ENCODE measurements at regions of chr7 and their contacts with region 1.

Region 1: GRCh38 chr7:37495574-37496184 is 47.0 kb upstream of the ELMO1 start:
- DNase-seq: no peak
- H3K4me3 Mint-ChIP-seq: no peak overlapping the region
- H3K27ac Mint-ChIP-seq: no peak overlapping the region
- H3K4me1 Mint-ChIP-seq: peaks cover 7% of the 10 kb centered on the region
- H3K27me3 Mint-ChIP-seq: no peaks in the 10 kb centered on the region

Region 2: DNA sequence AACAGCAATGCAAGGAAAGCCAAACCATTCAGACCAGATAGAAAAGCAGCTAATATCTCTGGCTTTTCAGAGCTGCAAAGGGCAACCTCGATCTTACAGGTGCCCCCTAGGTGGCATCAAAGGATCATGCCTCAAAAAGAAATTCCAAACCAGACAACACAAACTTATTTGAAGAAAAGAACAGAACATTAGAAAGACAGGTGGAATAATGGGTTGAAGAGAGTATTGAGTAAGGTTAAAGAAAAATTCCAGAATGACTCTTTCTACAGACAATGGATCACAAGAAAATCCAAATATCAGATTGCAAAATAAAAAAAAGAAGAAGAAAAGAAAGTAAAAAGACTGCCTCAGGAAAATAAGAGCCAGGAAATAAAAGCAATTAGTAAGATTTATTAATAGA is 260.8 kb before region 1 on chr7:
- CTCF ChIA-PET with region 1: interaction called, 17 read pairs
- POLR2A ChIA-PET with region 1: no interaction called
- DNase-seq: no peak
- H3K4me3 Mint-ChIP-seq: no peak overlapping the region
- H3K27ac Mint-ChIP-seq: no peak overlapping the region
- H3K4me1 Mint-ChIP-seq: peaks cover 11% of the 10 kb centered on the region
- H3K27me3 Mint-ChIP-seq: no peaks in the 10 kb centered on the region

Region 3: DNA sequence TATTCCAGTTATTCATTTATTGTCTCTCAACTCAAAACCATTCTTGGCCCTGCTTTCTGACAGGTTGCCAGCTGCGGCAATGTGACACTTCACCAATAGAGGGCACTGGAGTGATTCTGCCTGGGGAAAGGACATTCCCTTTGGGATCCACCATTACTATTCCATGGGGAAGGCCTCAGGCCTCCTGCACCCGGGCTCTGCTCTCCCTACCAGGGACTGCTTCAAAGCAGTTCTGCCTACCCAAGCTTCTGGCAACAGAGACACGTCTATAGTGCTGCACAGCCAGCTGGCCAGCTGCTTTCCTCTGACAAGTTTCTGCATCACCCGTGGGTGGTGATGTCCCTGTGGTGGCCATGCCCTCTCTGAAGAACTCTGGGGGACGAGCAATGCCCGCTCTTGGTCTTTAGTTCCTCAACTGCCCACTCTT is 210.9 kb before region 1 on chr7:
- CTCF ChIA-PET with region 1: interaction called, 11 read pairs
- POLR2A ChIA-PET with region 1: no interaction called
- DNase-seq: peak; percentile 42
- H3K4me3 Mint-ChIP-seq: no peak overlapping the region
- H3K27ac Mint-ChIP-seq: no peak overlapping the region
- H3K4me1 Mint-ChIP-seq: peaks cover 37% of the 10 kb centered on the region
- H3K27me3 Mint-ChIP-seq: no peaks in the 10 kb centered on the region

Region 4: GRCh38 chr7:37484426-37485073 is 11.1 kb before region 1 on chr7:
- CTCF ChIA-PET with region 1: interaction called, 10 read pairs
- POLR2A ChIA-PET with region 1: no interaction called
- DNase-seq: no peak
- H3K4me3 Mint-ChIP-seq: no peak overlapping the region
- H3K27ac Mint-ChIP-seq: no peak overlapping the region
- H3K4me1 Mint-ChIP-seq: peaks cover 1% of the 10 kb centered on the region
- H3K27me3 Mint-ChIP-seq: peaks cover 17% of the 10 kb centered on the region

Region 5: GRCh38 chr7:37508118-37508517 is 12.4 kb after region 1 on chr7:
- CTCF ChIA-PET with region 1: interaction called, 20 read pairs
- POLR2A ChIA-PET with region 1: no interaction called
- DNase-seq: no peak
- H3K4me3 Mint-ChIP-seq: no peak overlapping the region
- H3K27ac Mint-ChIP-seq: no peak overlapping the region
- H3K4me1 Mint-ChIP-seq: no peaks in the 10 kb centered on the region
- H3K27me3 Mint-ChIP-seq: peaks cover 37% of the 10 kb centered on the region